HEK293T (cell line): ENCODE measurements at regions of chr19 and their contacts with region 1.

Region 1: DNA sequence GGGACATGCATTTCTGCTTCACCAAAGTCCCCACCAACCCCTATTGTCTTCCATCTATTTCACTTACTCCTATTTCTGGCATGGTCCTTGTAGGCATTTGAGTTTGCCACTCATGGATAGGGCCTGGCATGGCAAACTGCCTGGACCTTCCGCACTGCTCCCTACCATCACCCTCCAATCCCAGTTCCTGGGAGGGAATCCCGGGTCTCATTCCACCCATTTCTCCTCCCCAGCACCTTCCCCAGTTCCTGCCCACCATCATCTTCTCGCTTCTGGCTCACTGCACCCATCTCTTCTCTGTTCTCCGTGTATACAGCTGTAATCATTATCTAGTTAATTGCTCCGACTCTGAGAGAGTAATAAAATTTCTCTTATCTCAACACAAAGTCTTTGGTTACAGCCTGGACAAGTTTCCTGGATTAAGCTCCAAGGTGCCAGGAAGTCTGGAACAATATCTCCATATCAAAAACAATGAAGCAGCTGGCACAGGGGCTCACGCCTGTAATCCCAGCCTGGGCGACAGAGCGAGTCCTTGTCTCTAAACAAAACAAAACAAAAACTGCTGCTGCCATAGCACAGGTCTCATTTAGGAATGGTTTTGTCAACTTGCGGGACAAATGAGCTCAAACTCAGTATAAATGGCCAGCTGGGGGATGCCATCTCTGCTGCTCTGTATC is 17.0 kb upstream of the COX7A1 start:
- DNase-seq: no peak

Region 2: DNA sequence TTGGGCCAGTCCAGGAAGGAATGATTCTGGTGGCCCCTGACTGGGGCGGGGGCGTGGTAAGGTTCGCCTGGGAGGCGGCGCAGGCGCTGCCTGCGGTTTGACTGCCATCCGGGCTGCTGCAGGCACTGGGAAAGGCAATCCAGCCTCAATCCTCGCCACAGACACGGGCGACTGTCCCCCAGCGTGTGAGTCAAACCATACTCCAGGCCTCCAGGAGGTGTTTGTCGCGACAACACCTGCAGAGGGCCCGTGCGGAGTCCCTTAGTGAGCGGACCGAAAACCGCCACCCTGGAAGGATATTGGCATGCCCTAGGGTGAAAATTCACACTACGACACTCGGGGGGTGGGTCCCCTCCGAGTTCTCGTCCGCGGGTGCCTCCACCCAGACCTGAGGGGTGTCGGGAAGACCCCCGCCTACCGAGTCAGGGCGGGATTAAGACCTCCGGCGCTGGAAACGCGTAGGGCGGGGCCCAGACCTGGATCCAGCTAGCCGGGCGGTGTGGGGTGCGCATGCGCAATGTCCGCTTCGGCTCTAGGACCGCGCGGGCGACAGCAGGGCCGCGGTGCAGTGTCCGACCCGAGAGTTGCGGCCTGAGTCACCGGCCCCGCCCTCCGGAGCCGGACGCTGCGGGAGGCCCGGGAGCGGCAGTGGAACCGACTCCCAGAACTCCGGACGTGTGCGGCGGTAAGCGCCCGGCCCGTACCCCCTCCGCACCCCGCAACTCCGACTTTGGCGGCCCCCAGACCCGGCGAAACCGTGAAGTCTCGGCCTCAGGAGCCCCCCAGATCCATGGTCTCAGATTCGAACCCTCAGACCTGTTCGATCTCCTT is 29.5 kb before region 1 on chr19 and contains the start of gene CAPNS1:
- CTCF ChIA-PET with region 1: no interaction called
- POLR2A ChIA-PET with region 1: interaction called, 14 read pairs
- DNase-seq: peak; percentile 97